Right ventricle myocardium superior (tissue), 1 donor: ENCODE measurements at regions of chr6 and their contacts with region 1.

Region 1: DNA sequence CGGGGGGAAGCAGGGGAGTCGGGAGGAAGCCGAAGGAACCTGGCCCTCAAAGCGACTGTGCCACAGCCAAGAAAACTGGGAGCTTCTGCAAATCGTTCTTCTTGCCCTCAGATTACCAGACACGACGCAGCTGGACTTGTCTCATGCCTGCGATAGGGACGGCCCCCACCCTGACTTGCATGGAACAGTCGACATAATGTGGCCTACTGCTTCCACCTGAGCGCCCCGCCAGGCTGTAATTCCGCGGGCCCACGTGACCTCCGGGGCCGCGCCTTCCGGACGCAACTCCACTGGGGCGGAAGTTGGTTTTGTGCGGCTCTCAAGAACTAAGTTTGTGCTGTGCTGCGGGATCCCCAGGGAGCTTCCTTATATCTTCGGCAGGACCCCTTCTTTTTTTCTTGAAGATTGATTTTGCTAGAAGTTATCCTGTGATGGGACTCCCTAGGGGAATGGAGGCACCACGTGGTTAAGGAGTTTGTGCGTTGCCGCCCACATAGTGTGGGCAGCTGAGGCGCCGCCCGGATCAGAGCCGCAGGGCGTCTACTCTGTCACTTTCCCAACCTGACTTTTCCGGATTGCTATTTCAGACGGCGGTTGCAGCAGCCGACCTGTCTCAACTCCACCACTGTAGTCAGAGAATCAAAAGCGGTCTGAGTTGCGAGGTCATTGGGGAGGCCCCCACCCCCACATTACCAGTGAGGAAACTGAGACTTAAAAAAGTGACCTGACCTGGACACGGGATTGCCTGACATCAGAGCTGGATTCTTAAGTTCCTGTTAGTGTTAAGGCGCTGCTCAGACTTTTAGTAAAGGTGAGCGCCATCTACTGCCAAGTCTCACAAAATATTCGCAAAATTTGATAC is 540 bp upstream of the CD164 start:
- DNase-seq: peak; percentile 96
- ATAC-seq: peak; percentile 95

Region 2: GRCh38 chr6:109095027-109095834 is 287.6 kb before region 1 on chr6 and contains the start of gene CEP57L1:
- intact Hi-C with region 1: loop called (anchors 2 kb)
- DNase-seq: peak; percentile 99
- ATAC-seq: peak; percentile 88
- total RNA-seq, gene CEP57L1: 6.3 TPM

Region 3: DNA sequence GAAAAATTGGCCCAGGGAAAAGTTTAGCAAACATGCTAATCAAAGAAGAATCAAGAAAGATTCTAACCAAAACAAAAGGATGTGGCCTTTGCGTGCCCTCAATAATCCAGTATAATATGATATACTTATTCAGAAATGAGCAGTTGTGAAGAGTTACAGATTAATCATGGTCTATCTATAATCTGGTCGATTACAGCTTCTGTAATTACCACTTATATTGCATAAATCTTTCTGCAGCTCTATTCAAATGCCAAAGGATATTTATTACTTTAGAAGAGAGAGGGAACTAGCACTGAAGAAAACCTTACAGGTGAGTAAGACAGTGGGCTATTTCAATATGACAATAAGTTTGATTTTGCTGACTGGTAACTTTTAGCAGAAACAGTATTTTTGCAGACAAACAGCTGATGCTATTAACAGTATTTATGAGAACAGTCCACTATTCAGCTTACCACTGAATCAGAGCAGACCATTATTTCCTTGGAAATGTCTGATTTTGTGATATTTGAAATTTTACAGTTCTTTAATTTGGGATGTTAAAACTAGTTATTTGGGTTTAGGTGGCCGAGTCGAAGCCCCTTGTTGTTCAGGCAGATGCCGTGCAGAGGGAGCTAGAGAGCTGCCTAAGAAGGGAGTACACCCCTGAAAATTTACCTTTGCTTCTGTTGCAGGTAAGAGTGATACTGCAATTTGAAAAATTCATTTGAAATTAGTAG is 195.2 kb before region 1 on chr6:
- intact Hi-C with region 1: loop called (anchors 5 kb)
- DNase-seq: peak; percentile 58
- ATAC-seq: peak; percentile 79

Region 4: DNA sequence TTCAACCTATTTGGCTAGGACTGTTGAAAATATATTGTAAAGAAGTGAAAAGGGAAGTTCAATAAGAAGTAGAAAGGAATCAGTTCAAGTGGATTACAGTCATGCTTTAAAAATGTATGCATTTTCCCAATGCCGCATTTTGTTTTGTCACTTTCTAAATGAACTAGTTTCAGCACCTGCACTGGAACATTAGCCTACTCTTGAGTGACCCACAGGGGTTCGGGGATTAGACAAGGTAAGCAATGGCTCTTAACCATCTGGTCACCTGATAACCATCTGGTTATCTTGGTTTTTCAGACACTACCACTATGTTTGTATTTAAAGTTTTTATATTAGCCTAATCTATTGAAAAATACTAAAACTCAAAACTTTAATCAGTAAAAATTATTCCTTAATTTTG is 98.1 kb before region 1 on chr6:
- intact Hi-C with region 1: no loop called
- DNase-seq: no peak
- ATAC-seq: no peak

Region 5: DNA sequence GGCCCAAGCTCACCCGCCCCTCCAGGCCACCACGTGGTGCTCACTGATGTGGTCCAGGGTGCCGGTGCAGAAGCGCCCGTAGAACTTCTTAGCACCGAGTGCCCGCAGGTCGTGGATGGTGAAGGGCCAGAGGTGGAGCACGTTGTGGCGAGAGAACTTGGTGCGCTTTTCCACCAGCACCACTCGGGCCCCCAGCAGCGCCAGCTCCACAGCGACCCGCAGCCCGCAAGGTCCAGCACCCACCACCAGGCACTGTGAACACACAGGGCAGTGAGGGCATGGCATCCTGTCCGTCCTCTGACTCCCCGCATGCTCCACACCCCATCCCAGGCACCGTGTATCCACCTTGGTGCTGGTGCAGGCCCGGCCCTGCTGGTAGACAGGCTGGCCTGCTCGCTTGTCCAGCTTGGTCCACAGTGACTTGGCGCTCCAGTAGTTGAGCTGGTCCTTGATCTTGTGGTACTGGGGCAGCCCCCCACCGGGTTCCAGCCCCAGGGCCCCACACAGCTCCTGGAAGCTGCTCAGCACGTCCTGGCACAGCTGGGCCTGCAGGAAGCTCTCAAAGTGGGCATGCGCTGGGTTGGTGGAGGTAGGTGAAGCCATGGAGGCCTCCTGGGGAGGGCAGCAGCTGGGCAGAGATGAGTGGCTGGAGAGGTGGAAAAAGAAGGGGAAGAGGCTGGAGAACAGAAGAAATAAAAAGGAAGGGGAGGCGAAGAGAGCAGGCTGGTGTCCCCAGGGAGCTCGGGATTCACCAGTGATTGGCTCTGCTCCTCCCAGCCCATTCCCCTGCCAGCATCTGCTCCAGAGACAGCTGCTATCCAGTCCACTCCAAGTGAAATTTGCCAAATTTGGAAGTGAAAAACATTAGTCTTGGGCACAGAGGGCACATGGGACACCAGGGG is 71.0 kb after region 1 on chr6:
- intact Hi-C with region 1: no loop called
- DNase-seq: peak; percentile 64
- ATAC-seq: no peak